Activated CD4-positive, alpha-beta T cell treated with anti-CD3 and anti-CD28 coated beads for 36 hours (primary cell): ENCODE measurements at regions of chr17 and their contacts with region 1.

Region 1: DNA sequence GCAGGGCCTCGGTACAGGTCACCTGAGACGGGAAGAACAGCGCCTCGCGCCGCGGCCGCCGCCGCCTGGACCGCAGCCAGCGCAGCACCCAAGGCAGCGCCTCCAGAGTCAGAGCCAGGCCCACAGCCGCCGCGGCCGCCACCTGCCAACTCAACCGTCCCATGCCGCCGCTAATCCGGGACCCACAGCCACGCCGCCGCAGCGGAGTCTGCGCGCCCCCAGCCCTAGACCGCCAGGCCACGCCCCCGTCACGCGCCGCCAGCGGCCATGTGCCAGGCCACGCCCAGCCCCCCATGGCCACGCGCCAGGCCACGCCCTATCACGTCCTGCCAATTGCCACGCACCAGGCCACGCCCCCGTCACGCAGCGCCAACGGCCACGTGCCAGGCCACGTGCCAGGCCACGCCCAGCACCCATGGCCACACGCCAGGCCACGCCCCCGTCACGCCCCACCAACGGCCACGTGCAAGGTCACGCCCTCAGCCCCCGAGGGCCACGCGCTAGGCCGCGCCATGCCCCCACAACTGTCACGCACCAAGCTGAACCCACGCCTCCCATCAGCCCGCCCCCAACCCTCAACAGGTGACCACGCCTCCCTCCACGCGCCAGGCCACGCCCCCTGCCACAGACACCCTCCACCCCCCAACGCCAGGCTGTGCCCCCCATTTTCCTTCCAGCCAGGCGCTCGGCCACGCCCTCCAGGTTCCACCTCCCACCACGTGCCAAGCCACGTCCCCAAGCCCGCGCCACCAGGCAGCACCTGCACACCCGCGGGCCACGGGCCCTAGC is at the start of gene PLD6:
- DNase-seq: peak; percentile 96
- ATAC-seq: peak; percentile 77
- H3K4me3 Mint-ChIP-seq: peak within 1 kb of the TSS; percentile 90
- H3K27ac Mint-ChIP-seq: peak within 1 kb of the TSS; percentile 97
- H3K4me1 Mint-ChIP-seq: peaks cover 25% of the 10 kb centered on the region
- H3K27me3 Mint-ChIP-seq: no peaks in the 10 kb centered on the region
- total RNA-seq, gene PLD6: 8.3 to 9.9 TPM

Region 2: GRCh38 chr17:17041571-17042380 is 164.5 kb before region 1 on chr17:
- CTCF ChIA-PET with region 1: no interaction called
- POLR2A ChIA-PET with region 1: no interaction called
- intact Hi-C with region 1: loop called in 1 of 2 experiments (anchors 1 kb)
- DNase-seq: peak; percentile 98
- ATAC-seq: peak; percentile 99
- H3K4me3 Mint-ChIP-seq: peak overlapping the region; percentile 69
- H3K27ac Mint-ChIP-seq: no peak overlapping the region
- H3K4me1 Mint-ChIP-seq: peaks cover 44% of the 10 kb centered on the region
- H3K27me3 Mint-ChIP-seq: no peaks in the 10 kb centered on the region

Region 3: DNA sequence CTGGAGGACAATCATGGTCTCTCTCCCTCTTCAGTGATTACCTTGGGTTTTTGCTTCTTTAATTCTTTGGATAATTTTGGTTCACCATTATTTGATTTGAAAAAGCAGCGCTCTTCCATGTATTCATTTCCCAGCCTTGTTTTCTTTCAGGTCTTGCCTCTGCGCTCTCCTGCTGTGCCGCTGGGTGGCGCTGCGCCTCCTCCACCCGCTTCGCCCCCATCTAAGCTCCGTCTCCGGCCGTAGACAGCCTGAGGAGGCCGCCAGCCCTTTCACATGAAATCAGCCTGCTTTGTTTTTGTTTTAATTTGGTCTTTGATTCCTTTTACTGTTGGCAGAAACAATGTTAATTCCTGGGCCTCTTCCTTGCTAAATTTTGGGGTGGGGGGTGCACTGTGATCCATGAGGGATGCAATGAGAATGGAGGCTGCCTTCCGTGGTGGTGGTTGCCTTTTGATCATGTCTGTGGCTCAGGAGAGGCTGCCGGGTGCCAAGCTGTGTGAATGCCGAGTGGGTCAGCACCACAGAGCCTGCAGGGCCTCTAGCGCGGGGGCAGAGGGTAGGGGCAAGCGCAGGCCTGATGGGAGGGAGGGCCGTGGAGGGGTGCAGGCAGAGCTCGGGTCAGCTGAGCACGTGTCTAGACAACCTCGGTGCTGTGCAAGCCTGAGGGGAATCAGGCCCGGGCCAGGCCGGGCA is 64.3 kb before region 1 on chr17:
- CTCF ChIA-PET with region 1: interaction called, 4 read pairs
- POLR2A ChIA-PET with region 1: no interaction called
- intact Hi-C with region 1: loop called in 1 of 2 experiments (anchors 1 kb)
- DNase-seq: peak; percentile 76
- ATAC-seq: peak; percentile 59
- H3K4me3 Mint-ChIP-seq: no peak overlapping the region
- H3K27ac Mint-ChIP-seq: peak overlapping the region; percentile 72
- H3K4me1 Mint-ChIP-seq: peaks cover 17% of the 10 kb centered on the region
- H3K27me3 Mint-ChIP-seq: no peaks in the 10 kb centered on the region

Region 4: GRCh38 chr17:17179371-17179827 is 26.9 kb before region 1 on chr17:
- CTCF ChIA-PET with region 1: interaction called, 4 read pairs
- POLR2A ChIA-PET with region 1: no interaction called
- intact Hi-C with region 1: loop called (anchors 1 kb)
- DNase-seq: peak; percentile 35
- ATAC-seq: peak; percentile 65
- H3K4me3 Mint-ChIP-seq: peak overlapping the region; percentile 51
- H3K27ac Mint-ChIP-seq: peak overlapping the region; percentile 97
- H3K4me1 Mint-ChIP-seq: peaks cover 93% of the 10 kb centered on the region
- H3K27me3 Mint-ChIP-seq: no peaks in the 10 kb centered on the region

Region 5: GRCh38 chr17:17303010-17303846 is 96.9 kb after region 1 on chr17 and contains the start of gene NT5M:
- CTCF ChIA-PET with region 1: no interaction called
- POLR2A ChIA-PET with region 1: no interaction called
- intact Hi-C with region 1: loop called in 1 of 2 experiments (anchors 1 kb)
- DNase-seq: peak; percentile 84
- ATAC-seq: peak; percentile 58
- H3K4me3 Mint-ChIP-seq: peak within 1 kb of the TSS; percentile 71
- H3K27ac Mint-ChIP-seq: peak within 1 kb of the TSS; percentile 87
- H3K4me1 Mint-ChIP-seq: peaks cover 28% of the 10 kb centered on the region
- H3K27me3 Mint-ChIP-seq: no peaks in the 10 kb centered on the region
- total RNA-seq, gene NT5M: 4.3 to 5.4 TPM